Caco-2 (cell line): ENCODE measurements at regions of chr11 and their contacts with region 1.

Region 1: DNA sequence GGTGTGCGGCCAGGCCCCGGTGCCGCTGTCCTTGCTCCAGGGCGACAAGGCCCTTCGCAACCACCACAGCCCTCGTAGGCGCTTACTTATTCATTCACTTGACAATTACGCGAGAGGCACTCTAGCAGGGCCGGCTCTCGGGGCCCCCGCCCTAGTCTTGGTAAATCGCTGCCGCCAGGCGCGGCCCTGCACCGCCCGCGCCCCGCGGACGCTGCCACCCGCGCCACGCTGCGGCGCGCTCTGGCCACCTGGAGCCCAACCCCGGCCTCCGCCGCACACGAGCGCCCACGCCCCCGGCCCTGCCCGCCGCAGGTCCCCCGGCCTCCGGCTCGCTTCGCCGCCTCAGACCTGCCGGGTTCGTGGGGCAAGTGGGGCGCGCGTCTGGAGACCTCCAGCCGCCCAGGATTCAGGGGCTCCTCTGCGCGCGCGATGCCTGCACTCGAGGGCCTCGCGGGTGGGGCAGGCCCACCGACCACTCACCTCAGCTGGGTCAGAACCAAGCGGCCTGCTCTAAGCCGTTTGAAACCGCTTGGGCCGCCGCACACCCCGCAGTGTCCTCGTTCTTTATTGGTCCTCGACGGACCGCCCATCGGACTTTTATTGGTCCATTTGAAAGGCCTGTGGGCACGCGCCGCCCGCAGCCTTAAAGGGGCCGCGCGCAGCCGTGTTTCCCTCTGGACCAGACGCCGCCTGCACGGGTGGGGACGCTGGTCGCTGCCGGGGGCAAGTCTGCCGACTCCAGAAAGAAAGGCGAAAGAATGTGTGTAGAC is at the start of gene CKAP5:
- DNase-seq: peak; percentile 93
- H3K4me3 ChIP-seq: peak within 1 kb of the TSS; percentile 93
- H3K4me3 Mint-ChIP-seq: peak within 1 kb of the TSS; percentile 86
- H3K27ac Mint-ChIP-seq: peak within 1 kb of the TSS; percentile 96
- H3K4me1 ChIP-seq: 0 out of 2 replicates have a peak, but pooled peaks cover 5% of the 10 kb centered on the region
- H3K4me1 Mint-ChIP-seq: peaks cover 18% of the 10 kb centered on the region
- H3K27me3 ChIP-seq: no peaks in the 10 kb centered on the region
- H3K27me3 Mint-ChIP-seq: no peaks in the 10 kb centered on the region
- CTCF ChIP-seq: no peak
- total RNA-seq, gene CKAP5: 221 and 224 TPM in 2 replicates

Region 2: DNA sequence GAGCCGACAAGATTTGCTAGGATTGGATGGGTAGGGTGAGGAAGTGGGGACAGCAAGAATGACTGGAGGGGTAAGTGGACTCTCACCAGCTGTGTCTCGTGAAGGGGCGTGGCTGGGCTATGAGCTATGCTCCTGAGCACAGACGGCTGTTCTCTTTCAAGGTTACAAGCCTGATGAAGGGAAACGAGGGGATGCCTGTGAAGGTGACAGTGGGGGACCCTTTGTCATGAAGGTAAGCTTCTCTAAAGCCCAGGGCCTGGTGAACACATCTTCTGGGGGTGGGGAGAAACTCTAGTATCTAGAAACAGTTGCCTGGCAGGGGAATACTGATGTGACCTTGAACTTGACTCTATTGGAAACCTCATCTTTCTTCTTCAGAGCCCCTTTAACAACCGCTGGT is 107.0 kb before region 1 on chr11:
- CTCF ChIA-PET with region 1: no interaction called
- POLR2A ChIA-PET with region 1: no interaction called
- intact Hi-C with region 1: no loop called
- DNase-seq: no peak
- H3K4me3 ChIP-seq: no peak overlapping the region
- H3K4me3 Mint-ChIP-seq: no peak overlapping the region
- H3K27ac Mint-ChIP-seq: no peak overlapping the region
- H3K4me1 ChIP-seq: no peaks in the 10 kb centered on the region
- H3K4me1 Mint-ChIP-seq: no peaks in the 10 kb centered on the region
- H3K27me3 ChIP-seq: no peaks in the 10 kb centered on the region
- H3K27me3 Mint-ChIP-seq: no peaks in the 10 kb centered on the region
- CTCF ChIP-seq: no peak

Region 3: GRCh38 chr11:46778416-46778815 is 67.5 kb before region 1 on chr11:
- CTCF ChIA-PET with region 1: no interaction called
- POLR2A ChIA-PET with region 1: no interaction called
- intact Hi-C with region 1: no loop called
- DNase-seq: peak; percentile 53 to 60
- H3K4me3 ChIP-seq: no peak overlapping the region
- H3K4me3 Mint-ChIP-seq: no peak overlapping the region
- H3K27ac Mint-ChIP-seq: peak overlapping the region; percentile 72
- H3K4me1 ChIP-seq: peaks cover 22% of the 10 kb centered on the region
- H3K4me1 Mint-ChIP-seq: peaks cover 22% of the 10 kb centered on the region
- H3K27me3 ChIP-seq: no peaks in the 10 kb centered on the region
- H3K27me3 Mint-ChIP-seq: no peaks in the 10 kb centered on the region
- CTCF ChIP-seq: no peak

Region 4: DNA sequence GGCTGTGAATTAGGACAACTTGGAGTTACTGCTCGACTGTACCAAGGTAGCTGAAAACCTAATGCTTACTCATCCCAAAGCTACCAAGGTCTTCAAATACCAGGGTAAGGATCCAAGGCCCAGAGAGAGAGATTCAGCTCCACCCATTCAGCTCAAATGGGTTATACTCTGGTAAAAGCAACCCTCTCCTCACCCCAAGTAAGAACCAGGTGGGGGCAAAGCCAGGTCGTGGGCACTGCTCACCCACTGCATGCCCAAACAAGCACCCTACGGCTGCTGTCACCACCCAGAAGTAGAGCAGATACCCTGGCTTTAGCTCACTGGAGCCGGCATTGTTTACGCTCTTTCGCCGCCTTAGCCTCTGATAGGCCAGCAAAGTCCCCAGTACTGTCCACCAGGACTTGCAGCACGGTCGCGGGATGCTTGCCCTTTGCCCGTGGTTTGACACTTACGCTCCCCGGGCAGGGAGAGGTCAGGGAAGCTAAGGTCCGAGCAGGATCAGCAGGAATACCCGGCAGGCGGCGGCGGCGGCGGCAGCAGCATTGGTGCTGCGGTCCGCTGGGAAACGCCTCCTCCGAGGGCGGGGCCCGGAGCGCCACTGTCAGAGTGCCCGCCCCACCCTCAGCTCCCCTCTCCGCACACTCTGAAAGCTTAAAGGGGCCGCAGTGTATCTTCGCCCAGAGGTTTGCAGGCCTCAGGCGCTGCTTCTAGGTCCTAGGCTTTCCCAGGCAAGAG is 19.4 kb before region 1 on chr11:
- CTCF ChIA-PET with region 1: no interaction called
- POLR2A ChIA-PET with region 1: interaction called, 7 read pairs
- intact Hi-C with region 1: loop called (anchors 1 kb)
- DNase-seq: peak; percentile 83 to 91
- H3K4me3 ChIP-seq: peak overlapping the region; percentile 22
- H3K4me3 Mint-ChIP-seq: peak overlapping the region; percentile 72
- H3K27ac Mint-ChIP-seq: peak overlapping the region; percentile 35
- H3K4me1 ChIP-seq: peaks cover 27% of the 10 kb centered on the region
- H3K4me1 Mint-ChIP-seq: peaks cover 29% of the 10 kb centered on the region
- H3K27me3 ChIP-seq: no peaks in the 10 kb centered on the region
- H3K27me3 Mint-ChIP-seq: no peaks in the 10 kb centered on the region
- CTCF ChIP-seq: no peak